Dendritic cell treated with granulocyte-macrophage colony-stimulating factor and Interleukin-4, amounts not matched to agents 40 ng/mL and 50 ng/mL, for 4 days (primary cell): ENCODE measurements at regions of chr20 and their contacts with region 1.

Region 1: GRCh38 chr20:58650776-58651558 is at the start of gene STX16:
- H3K4me3 Mint-ChIP-seq: peak within 1 kb of the TSS; percentile 96
- H3K27ac Mint-ChIP-seq: peak within 1 kb of the TSS; percentile 99
- H3K4me1 Mint-ChIP-seq: peaks cover 29% of the 10 kb centered on the region
- H3K27me3 Mint-ChIP-seq: peaks cover 11% of the 10 kb centered on the region

Region 2: GRCh38 chr20:58236612-58237330 is 414.2 kb before region 1 on chr20:
- intact Hi-C with region 1: loop called (anchors 5 kb)
- H3K4me3 Mint-ChIP-seq: peak overlapping the region; percentile 84
- H3K27ac Mint-ChIP-seq: peak overlapping the region; percentile 63
- H3K4me1 Mint-ChIP-seq: peaks cover 9% of the 10 kb centered on the region
- H3K27me3 Mint-ChIP-seq: peaks cover 3% of the 10 kb centered on the region

Region 3: GRCh38 chr20:58309575-58310290 is 341.2 kb before region 1 on chr20 and contains the start of gene RAB22A:
- intact Hi-C with region 1: loop called (anchors 5 kb)
- H3K4me3 Mint-ChIP-seq: peak within 1 kb of the TSS; percentile 87
- H3K27ac Mint-ChIP-seq: peak within 1 kb of the TSS; percentile 91
- H3K4me1 Mint-ChIP-seq: peaks cover 51% of the 10 kb centered on the region
- H3K27me3 Mint-ChIP-seq: peaks cover 1% of the 10 kb centered on the region

Region 4: GRCh38 chr20:58692594-58693226 is 41.7 kb after region 1 on chr20 and contains the start of gene NPEPL1:
- intact Hi-C with region 1: loop called (anchors 1 kb)
- H3K4me3 Mint-ChIP-seq: peak within 1 kb of the TSS; percentile 75
- H3K27ac Mint-ChIP-seq: peak within 1 kb of the TSS; percentile 97
- H3K4me1 Mint-ChIP-seq: peaks cover 35% of the 10 kb centered on the region
- H3K27me3 Mint-ChIP-seq: no peaks in the 10 kb centered on the region

Region 5: DNA sequence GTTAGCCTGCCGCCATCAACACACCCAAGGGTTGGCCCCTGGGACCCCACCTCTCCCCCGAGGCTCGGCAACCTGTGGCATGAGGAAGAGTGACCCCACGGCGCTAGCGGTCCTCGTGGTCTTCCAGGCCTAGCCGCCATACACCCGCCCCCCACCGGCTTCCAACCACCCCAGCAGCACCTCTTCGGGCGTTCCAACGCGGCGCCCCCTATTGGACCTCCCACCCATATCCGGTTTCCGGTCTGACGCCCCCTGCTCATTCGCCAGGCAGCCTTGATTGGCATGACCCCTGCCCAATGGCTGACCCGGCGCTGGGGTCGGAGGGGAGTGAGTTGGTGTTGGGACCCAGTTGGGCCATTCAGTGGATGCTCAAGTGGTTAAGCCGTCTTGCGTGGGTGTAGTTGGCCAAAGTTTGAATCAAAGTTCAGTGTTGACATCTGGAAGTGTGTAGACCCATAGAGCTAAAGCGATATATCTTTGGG is 199.8 kb after region 1 on chr20 and contains the start of gene GNAS-AS1:
- intact Hi-C with region 1: loop called (anchors 5 kb)
- H3K4me3 Mint-ChIP-seq: no peak within 1 kb of the TSS
- H3K27ac Mint-ChIP-seq: no peak within 1 kb of the TSS
- H3K4me1 Mint-ChIP-seq: peaks cover 61% of the 10 kb centered on the region
- H3K27me3 Mint-ChIP-seq: peaks cover 91% of the 10 kb centered on the region

Region 6: GRCh38 chr20:58890518-58891085 is 239.6 kb after region 1 on chr20:
- intact Hi-C with region 1: loop called (anchors 2 kb)
- H3K4me3 Mint-ChIP-seq: peak overlapping the region; percentile 96
- H3K27ac Mint-ChIP-seq: peak overlapping the region; percentile 88
- H3K4me1 Mint-ChIP-seq: peaks cover 35% of the 10 kb centered on the region
- H3K27me3 Mint-ChIP-seq: peaks cover 7% of the 10 kb centered on the region

Region 7: GRCh38 chr20:59032023-59032712 is 381.2 kb after region 1 on chr20 and contains the start of gene ATP5F1E:
- intact Hi-C with region 1: loop called (anchors 5 kb)
- H3K4me3 Mint-ChIP-seq: peak within 1 kb of the TSS; percentile 93
- H3K27ac Mint-ChIP-seq: peak within 1 kb of the TSS; percentile 98
- H3K4me1 Mint-ChIP-seq: peaks cover 37% of the 10 kb centered on the region
- H3K27me3 Mint-ChIP-seq: no peaks in the 10 kb centered on the region